Ascending aorta (tissue), 2 donors: ENCODE measurements at regions of chr9 and their contacts with region 1.

Region 1: GRCh38 chr9:107282753-107283625 is at the start of gene RAD23B:
- DNase-seq: peak; percentile 93 to 99
- H3K4me3 ChIP-seq: peak within 1 kb of the TSS; percentile 82 to 95
- H3K27ac ChIP-seq: peak within 1 kb of the TSS; percentile 98 to 99
- H3K4me1 ChIP-seq: peaks cover 0 to 8% of the 10 kb centered on the region in 2 donors
- H3K27me3 ChIP-seq: no peaks in the 10 kb centered on the region
- CTCF ChIP-seq: no peak
- total RNA-seq, gene RAD23B: 57.7 TPM

Region 2: DNA sequence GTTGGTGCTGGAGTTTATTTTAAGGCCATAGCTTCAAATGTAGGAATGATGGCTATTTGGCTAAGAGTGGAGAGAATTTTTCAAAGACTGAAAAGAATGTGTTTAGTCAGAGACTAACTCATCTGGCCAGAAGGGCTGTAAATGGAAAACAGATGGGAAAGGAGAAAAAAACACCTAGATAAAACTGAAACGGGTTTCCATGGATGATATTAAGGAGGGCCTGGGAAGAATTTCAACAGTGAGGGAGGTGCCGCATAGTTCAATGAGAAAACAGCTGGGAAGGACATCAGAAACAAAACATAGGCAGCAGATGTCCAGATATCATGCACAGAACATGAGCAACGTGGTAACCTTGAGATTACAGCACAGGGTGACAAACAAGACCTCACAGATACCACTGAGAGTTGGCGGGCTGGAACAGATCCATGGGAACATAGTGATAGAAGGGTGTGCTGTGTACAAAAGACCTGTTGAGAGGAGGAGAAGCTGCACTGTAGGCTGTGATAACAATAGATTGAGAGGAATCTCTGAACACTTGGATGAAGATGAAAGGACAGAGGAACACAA is 31.1 kb before region 1 on chr9:
- intact Hi-C with region 1: loop called (anchors 1 kb)
- DNase-seq: no peak
- H3K4me3 ChIP-seq: no peak overlapping the region
- H3K27ac ChIP-seq: peak overlapping the region in 1 of 2 donors; percentile 18
- H3K4me1 ChIP-seq: peaks cover 0 to 3% of the 10 kb centered on the region in 2 donors
- H3K27me3 ChIP-seq: no peaks in the 10 kb centered on the region
- CTCF ChIP-seq: no peak